Head of caudate nucleus (tissue), 42 donors: ENCODE measurements at regions of chr3 and their contacts with region 1.

Region 1: DNA sequence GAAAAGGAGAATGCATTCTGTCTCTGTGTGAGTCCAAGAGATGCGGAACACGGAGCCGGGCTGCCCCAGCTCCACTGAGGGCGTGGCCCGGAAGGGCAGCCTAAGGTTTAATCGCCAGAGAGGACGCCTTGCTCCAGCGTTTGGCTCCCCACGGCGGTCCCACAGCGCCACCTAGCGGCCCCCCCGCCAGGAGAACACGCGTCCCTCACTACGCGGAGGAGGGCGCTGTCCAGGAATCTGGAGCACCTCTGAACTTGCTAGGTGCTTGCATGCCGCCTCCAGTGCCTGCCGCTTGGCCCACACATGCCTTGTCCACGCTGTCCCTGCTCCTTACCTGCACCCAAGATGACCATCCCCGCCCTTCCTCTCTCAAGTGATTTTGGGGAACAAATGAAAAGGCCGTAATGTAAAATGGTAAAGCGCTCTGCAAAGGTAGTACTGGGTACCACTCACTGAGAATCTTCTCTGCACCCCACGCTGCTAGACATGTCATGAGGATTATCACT is 14.4 kb upstream of the MRPS22 start:
- DNase-seq: peak; percentile 71 to 96 (median 90)

Region 2: DNA sequence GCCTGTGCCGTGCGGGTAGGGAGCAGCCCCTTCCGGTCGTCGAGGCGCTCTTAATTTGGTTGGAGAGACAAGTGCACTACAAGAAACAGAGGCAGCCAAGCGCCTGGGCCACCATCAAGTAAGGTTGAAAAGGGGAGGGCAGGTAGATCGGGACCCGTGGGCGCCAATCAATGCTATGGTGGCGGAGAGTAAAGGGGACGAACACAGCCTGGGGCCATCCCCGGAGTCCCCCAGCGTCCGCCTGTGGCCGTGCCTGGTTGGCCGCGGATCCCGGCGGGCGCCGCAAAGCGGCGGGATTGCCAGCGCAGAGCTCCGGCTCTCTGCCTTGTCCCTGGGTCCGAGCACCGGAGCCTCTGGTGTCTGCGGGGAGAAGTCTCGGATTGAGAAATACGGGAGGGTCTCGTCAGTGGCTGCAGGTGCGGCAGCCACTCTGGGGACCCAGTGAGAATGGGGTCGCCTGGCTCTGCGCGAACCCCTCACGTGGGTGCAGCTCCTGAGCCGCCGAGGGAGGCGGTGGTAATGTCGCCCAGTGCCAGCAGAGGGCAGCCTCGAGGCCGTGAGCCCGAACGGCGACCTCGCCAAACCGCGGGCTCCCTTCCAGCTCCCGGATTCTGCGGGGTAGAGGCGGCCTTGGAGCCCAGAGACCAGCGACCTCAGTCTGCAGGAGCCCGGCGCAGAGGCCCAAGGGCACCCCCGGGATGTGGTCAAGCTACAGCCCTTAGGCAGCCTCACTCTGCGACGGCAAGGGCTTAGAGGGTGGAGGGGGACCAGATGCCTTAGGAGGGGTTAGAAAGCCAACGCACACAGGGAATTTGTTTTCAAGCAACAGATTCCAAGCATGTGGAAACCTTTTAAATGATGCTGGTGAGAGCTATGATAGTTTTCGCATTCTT is 393.3 kb before region 1 on chr3:
- intact Hi-C with region 1: loop called (anchors 5 kb)
- DNase-seq: peak; percentile 42 to 88 (median 74)

Region 3: GRCh38 chr3:139111392-139112229 is 217.8 kb before region 1 on chr3:
- intact Hi-C with region 1: loop called (anchors 5 kb)
- DNase-seq: peak; percentile 37 to 92 (median 76)

Region 4: GRCh38 chr3:139127101-139127500 is 202.3 kb before region 1 on chr3:
- intact Hi-C with region 1: no loop called
- DNase-seq: peak in 1 of 42 donors; percentile 27

Region 5: GRCh38 chr3:139288266-139288821 is 41.1 kb before region 1 on chr3:
- intact Hi-C with region 1: no loop called
- DNase-seq: no peak